HepG2 (cell line): ENCODE measurements at regions of chr7 and their contacts with region 1.

Region 1: GRCh38 chr7:93551063-93551904 is 23.2 kb downstream of the CALCR start:
- DNase-seq: peak; percentile 17
- ATAC-seq: peak; percentile 57
- H3K4me3 ChIP-seq: no peak overlapping the region
- H3K27ac ChIP-seq: no peak overlapping the region
- H3K4me1 ChIP-seq: no peaks in the 10 kb centered on the region
- H3K27me3 ChIP-seq: no peaks in the 10 kb centered on the region
- CTCF ChIP-seq: peak; percentile 56
- EP300 ChIP-seq: no peak
- POLR2A ChIP-seq: no peak
- RAD21 ChIP-seq: no peak

Region 2: DNA sequence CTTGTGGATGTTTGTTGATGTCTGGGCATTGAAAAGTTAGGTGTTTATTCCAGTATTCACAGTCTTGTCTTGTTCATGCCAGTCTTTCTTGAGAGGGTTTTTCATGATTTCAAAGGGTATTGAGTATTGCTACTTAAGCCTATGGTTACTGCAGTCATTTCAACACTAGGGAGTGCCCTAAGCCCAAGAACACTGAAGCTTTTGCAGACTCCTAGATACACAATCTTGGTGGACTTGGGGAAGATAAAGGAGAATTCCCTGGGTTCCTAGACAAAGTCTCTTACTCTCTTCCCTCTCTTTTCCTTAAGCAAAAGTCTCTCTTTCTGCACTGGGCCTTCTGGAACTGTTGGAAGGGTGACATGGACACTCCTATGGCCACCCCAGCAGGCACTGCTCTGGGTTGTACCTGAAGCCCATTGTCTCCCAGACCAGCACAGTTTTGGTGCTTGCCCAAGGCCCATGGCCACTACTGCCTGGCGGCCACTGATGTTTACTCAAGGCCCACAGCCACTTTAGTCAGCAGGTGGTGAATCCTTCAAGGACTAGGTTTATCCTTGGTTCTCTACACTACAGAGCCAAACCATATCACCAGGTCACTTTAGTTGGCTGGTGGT is 458.4 kb before region 1 on chr7:
- CTCF ChIA-PET with region 1: no interaction called
- POLR2A ChIA-PET with region 1: no interaction called
- in situ Hi-C with region 1: no loop called
- intact Hi-C with region 1: loop called (anchors 5 kb)
- DNase-seq: peak; percentile 15
- ATAC-seq: peak; percentile 70
- H3K4me3 ChIP-seq: no peak overlapping the region
- H3K27ac ChIP-seq: no peak overlapping the region
- H3K4me1 ChIP-seq: no peaks in the 10 kb centered on the region
- H3K27me3 ChIP-seq: no peaks in the 10 kb centered on the region
- CTCF ChIP-seq: peak; percentile 48
- EP300 ChIP-seq: no peak
- POLR2A ChIP-seq: no peak
- RAD21 ChIP-seq: no peak

Region 3: DNA sequence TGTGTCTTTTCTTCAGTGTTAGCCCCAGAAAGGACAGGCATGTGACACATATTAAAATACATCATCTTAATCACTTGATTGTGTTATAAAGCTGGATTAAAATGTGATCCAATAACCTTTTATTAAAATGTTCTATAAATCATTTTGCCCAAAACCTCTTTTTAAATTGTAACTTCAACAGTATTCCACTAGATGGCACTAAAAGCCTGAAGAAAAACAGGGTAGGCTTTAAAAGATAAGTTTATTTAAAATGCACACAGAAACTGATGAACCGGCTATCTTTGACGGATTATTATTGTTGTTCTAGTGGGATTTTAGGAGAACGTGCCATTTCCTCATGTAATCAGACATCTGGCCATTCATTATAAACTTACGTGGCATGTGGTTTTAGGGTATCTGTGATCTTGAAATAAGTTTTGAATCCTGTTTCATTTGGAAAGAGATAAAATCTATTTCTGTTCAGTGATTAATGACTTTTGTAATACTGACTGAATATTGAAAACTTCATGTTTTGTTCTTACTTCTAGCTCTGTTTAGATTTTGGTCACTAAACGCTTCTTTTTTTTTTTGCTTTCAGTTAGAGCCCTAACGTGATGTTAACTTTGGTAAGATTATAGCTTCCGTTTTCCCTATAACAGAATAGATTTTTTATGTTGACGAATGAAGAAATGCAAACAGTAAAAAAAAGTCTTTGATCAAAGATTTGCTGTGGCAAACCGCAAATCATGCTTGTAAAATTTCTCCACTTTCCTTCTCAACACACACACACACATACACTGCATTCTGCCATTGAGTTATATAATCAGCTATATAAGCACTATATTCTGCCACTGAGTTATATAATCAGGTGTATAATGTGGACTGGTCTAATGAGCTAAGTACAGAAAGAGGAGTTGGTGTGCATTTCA is 305.5 kb before region 1 on chr7:
- CTCF ChIA-PET with region 1: interaction called, 15 read pairs
- POLR2A ChIA-PET with region 1: no interaction called
- in situ Hi-C with region 1: loop called (anchors 5 kb)
- intact Hi-C with region 1: loop called (anchors 1 kb)
- DNase-seq: peak; percentile 21
- ATAC-seq: no peak
- H3K4me3 ChIP-seq: no peak overlapping the region
- H3K27ac ChIP-seq: no peak overlapping the region
- H3K4me1 ChIP-seq: no peaks in the 10 kb centered on the region
- H3K27me3 ChIP-seq: no peaks in the 10 kb centered on the region
- CTCF ChIP-seq: peak; percentile 53
- EP300 ChIP-seq: no peak
- POLR2A ChIP-seq: no peak
- RAD21 ChIP-seq: no peak

Region 4: DNA sequence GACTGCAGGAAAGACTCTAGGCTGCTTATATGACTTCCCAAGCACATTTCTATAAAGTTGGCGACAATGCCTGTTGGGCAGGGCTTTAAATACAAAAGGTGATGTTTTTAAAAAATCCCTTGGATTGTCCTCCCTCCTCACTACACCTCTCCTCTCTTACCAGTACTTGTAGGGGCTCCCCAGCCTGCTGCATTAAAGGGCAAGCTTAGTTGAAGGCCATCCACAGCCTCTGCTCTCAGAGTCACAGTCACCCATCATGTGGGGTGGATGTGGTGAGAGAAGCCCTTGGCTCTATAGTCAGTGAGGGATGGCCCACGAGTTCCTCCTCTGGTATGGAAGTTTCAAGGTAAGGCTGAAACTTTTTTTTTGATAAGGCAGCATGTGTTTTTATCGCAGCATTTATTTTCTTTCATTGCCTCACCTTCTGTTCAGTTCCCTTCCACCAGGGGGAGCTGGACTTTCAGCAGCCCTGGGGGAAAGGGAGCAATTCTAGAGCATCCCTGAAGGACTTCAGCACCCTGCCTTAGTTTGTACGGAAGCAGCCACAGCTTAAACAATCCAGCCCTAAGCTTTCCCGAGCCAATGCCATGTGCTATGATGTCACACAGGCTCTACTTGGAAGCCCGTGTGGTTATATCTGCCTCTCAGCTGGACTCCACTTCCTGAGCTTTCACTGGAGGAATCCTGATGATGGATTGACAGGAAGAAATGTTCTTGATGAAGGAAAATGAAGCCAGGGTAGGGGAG is 108.6 kb before region 1 on chr7:
- CTCF ChIA-PET with region 1: interaction called, 3 read pairs
- POLR2A ChIA-PET with region 1: no interaction called
- in situ Hi-C with region 1: no loop called
- intact Hi-C with region 1: loop called (anchors 5 kb)
- DNase-seq: peak; percentile 26
- ATAC-seq: peak; percentile 87
- H3K4me3 ChIP-seq: no peak overlapping the region
- H3K27ac ChIP-seq: no peak overlapping the region
- H3K4me1 ChIP-seq: no peaks in the 10 kb centered on the region
- H3K27me3 ChIP-seq: no peaks in the 10 kb centered on the region
- CTCF ChIP-seq: peak; percentile 73
- EP300 ChIP-seq: no peak
- POLR2A ChIP-seq: no peak
- RAD21 ChIP-seq: no peak